ENCODE measurements at regions of chr18 and their contacts with region 1.

Region 1: GRCh38 chr18:610214-610903 is 13.6 kb downstream of the CLUL1 start:
- DNase-seq: no peak
- H3K4me3 ChIP-seq: no peak overlapping the region
- H3K27me3 ChIP-seq: peaks cover 2% of the 10 kb centered on the region; the same call in 1 of the 2 replicates
- CTCF ChIP-seq: no peak

Region 2: GRCh38 chr18:183769-184168 is 426.6 kb before region 1 on chr18:
- CTCF ChIA-PET with region 1: no interaction called
- POLR2A ChIA-PET with region 1: no interaction called
- DNase-seq: no peak
- H3K4me3 ChIP-seq: no peak overlapping the region
- H3K27me3 ChIP-seq: no peaks in the 10 kb centered on the region
- CTCF ChIP-seq: no peak

Region 3: GRCh38 chr18:812376-813171 is 202.2 kb after region 1 on chr18:
- CTCF ChIA-PET with region 1: no interaction called
- POLR2A ChIA-PET with region 1: interaction called, 17 read pairs
- DNase-seq: peak; percentile 34
- H3K4me3 ChIP-seq: peak overlapping the region; percentile 84
- H3K27me3 ChIP-seq: no peaks in the 10 kb centered on the region
- CTCF ChIP-seq: no peak